ENCODE measurements at regions of chr2 and their contacts with region 1.

Region 1: DNA sequence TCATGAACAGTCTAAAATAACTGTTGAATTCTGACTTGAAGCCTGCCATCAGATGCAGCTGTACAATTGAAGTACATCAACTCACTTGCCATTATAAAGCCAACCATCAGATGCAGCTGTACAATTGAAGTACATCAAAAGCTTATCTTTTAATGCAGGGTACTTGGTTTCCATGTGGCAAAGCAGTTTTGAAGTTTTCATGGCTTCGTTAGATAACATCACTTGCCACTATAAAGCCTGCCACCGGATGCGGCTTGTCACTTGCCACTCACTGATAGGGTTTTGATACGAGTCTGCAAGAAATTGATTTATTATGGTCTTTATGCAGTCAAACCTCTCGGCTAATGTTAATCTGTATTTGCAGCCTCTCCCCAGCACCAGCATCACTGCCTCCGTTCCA is 1605.8 kb downstream of the SUCLG1 start:
- DNase-seq: no peak
- H3K4me3 Mint-ChIP-seq: no peak overlapping the region
- H3K27ac Mint-ChIP-seq: no peak overlapping the region
- H3K4me1 Mint-ChIP-seq: no peaks in the 10 kb centered on the region
- H3K27me3 Mint-ChIP-seq: no peaks in the 10 kb centered on the region
- CTCF ChIP-seq: no peak

Region 2: DNA sequence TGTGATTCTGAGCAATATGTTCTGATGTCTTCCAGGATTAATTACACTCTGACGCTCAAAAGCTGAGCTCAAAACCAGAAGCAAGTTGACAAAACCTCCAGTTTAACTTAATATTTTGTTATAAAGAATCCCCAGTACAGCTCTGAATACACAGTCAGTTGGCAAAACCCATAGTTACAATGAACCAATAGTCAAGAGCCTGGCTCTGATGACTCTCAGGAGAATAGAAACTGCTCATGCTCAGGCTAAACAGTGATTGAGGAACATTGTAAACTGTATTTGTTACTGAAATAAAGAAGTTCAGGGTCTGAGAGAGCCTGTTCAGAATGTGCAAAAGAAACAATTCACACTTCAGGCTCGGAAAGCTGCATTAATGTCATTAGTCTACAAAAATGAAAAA is 39.9 kb after region 1 on chr2:
- CTCF ChIA-PET with region 1: no interaction called
- intact Hi-C with region 1: loop called (anchors 1 kb)
- DNase-seq: no peak
- H3K4me3 Mint-ChIP-seq: no peak overlapping the region
- H3K27ac Mint-ChIP-seq: no peak overlapping the region
- H3K4me1 Mint-ChIP-seq: no peaks in the 10 kb centered on the region
- H3K27me3 Mint-ChIP-seq: no peaks in the 10 kb centered on the region
- CTCF ChIP-seq: no peak